Sciatic nerve (tissue), 2 donors: ENCODE measurements at regions of chr3 and their contacts with region 1.

Region 1: GRCh38 chr3:129039271-129040038 is 21.1 kb upstream of the GP9 start:
- DNase-seq: peak; percentile 49
- ATAC-seq: peak; percentile 32

Region 2: DNA sequence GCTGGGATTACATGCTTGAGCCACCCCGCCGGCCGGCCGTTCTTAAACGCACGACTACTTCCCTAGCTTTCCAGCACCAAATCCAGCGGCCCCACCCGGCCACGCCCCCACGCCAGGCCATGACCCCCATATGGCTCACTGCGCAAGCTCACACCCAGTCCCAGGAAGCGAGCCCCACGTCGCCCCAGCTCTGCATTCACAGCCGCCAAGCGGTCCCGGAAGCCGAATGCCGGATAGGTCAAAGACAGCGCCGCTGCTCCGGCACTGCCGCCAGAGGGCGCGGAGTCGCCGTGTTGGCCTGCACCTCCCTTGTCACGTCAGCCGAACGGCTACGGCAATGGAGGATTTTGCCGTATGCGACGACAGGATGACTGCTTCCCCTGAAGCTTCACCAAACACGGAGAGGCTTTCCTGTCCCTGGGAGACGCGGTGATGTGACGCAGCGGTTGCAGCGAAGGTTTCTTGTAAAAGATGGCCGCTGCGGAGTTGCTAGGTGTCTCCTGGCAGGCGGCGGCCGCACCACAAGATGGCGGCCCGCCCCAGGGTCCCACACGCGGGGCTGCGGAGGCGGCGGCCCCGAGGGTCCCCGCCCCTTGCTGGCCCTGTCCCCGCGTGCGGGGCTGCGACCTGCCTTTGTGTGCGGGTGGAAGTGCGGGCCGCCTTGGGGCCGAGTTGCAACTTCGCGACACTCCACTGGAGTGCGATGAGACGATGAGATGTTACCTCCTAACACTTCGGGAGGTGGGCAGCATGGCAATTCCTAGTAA is 358.7 kb before region 1 on chr3:
- intact Hi-C with region 1: no loop called
- DNase-seq: peak; percentile 100
- ATAC-seq: peak; percentile 100

Region 3: GRCh38 chr3:129077222-129077621 is 37.8 kb after region 1 on chr3:
- intact Hi-C with region 1: loop called (anchors 1 kb)
- DNase-seq: no peak
- ATAC-seq: no peak